OCI-LY7 (cell line): ENCODE measurements at regions of chr16 and their contacts with region 1.

Region 1: GRCh38 chr16:636206-637080 is at the start of gene METTL26:
- DNase-seq: peak; percentile 96
- H3K4me3 ChIP-seq: peak within 1 kb of the TSS; percentile 87
- H3K27ac ChIP-seq: peak within 1 kb of the TSS; percentile 77
- H3K4me1 ChIP-seq: peaks cover 46% of the 10 kb centered on the region
- CTCF ChIP-seq: no peak
- total RNA-seq, gene METTL26: 135 and 152 TPM in 2 replicates

Region 2: DNA sequence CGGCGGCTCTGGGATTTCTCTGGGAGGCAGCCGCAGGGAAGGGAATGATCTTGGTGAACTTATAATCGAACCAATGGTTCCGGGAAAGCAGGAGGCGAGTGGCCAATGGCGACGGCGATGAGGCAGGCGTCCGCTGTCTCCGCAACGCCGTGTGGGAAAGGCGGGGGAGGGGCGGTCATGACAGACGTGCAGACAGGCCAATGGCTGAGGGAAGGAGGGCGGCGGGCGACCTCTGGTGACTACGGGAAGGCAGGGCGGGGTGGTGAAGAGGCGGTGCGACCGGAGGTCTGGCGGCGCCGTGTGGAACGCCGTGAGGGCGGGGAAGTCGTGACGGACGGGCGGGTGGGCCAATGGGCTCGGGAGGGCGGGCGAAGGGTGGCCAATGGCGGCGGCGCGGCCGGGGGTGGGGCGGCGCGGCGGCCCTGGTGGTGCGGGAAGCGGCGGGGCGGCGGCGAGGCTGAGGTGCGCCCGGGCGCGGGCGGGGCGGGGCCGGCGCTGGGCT is 46.7 kb before region 1 on chr16 and contains the start of gene RAB40C:
- CTCF ChIA-PET with region 1: no interaction called
- POLR2A ChIA-PET with region 1: interaction called, 3 read pairs
- intact Hi-C with region 1: loop called (anchors 1 kb)
- DNase-seq: peak; percentile 99
- H3K4me3 ChIP-seq: peak within 1 kb of the TSS; percentile 84
- H3K27ac ChIP-seq: peak within 1 kb of the TSS; percentile 89
- H3K4me1 ChIP-seq: peaks cover 25% of the 10 kb centered on the region
- CTCF ChIP-seq: no peak
- total RNA-seq, gene RAB40C: 18.2 and 20.9 TPM in 2 replicates

Region 3: DNA sequence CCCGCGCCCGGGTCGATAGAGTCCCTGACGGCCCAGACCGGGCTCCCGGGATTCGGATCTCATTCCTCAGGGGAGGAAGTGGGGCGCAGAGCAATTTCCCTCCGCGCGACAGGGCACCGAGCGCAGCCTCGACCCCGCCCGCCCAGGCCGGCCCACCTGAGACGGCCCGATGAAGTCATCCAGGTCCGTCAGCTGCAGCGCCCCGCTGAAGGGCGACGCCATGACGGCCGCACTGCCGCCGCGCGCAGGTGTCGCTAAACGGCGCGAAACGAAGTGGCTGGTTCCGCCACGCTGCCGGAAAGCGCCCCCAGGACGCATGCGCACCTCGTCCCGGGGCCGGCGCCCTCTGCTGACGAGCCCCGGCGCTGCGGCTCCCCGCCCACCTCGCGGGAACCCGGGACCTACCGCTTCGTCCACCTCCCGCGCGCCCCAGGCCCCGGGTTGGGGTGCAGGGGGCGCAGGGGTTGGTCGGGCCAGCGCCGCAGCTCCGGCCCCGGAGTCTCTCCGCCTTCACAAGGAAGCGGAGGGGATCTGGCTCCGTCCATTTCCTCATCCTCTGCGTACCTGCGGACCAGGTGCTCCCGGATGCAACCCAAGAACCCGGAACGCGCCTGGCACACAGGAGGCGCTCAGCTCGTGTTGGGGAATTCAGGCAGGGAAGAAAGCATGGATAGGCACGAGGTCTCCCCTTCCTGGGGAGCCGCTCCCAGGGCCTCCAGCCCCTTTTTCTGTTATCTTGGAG is 104.5 kb after region 1 on chr16 and contains the start of gene CIAO3:
- CTCF ChIA-PET with region 1: no interaction called
- POLR2A ChIA-PET with region 1: no interaction called
- intact Hi-C with region 1: no loop called
- DNase-seq: peak; percentile 96
- H3K4me3 ChIP-seq: peak within 1 kb of the TSS; percentile 91
- H3K27ac ChIP-seq: peak within 1 kb of the TSS; percentile 97
- H3K4me1 ChIP-seq: peaks cover 48% of the 10 kb centered on the region
- CTCF ChIP-seq: peak; percentile 87
- total RNA-seq, gene CIAO3: 142 and 169 TPM in 2 replicates